Naive thymus-derived CD4-positive, alpha-beta T cell (primary cell): ENCODE measurements at regions of chr4 and their contacts with region 1.

Region 1: DNA sequence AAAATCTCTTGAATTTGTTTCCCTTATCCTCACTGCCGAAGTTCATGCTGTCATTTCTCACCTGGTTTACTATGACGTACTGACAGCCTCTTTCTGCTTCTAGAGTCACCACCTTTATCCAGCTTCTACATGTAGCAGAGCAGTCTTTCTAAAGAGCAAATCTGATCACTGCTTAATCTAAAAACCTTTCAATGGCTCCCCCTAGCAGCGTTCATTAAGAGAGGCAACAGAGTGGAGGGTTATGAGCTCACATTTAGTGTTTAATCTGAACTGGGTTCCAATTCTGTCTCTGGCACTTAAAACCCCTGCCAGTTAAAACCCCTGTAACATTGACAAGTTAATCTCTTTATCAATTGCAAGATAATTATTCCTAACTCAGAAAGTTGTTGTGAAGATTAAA is 4.4 kb downstream of the RBPJ start:
- DNase-seq: peak in 6 of 9 donors; percentile 16 to 40 (median 26)
- ATAC-seq: peak; percentile 46
- H3K4me3 ChIP-seq: no peak overlapping the region
- H3K4me3 Mint-ChIP-seq: peak overlapping the region in 2 of 10 donors; percentile 4 to 61
- H3K27ac ChIP-seq: no peak overlapping the region
- H3K27ac Mint-ChIP-seq: peak overlapping the region in 4 of 9 donors; percentile 1 to 53 (median 9)
- H3K4me1 ChIP-seq: peaks cover 10 to 12% of the 10 kb centered on the region in 2 donors
- H3K4me1 Mint-ChIP-seq: peaks cover 41 to 58% (median 53%) of the 10 kb centered on the region in 7 donors
- H3K27me3 ChIP-seq: no peaks in the 10 kb centered on the region
- H3K27me3 Mint-ChIP-seq: no peaks in the 10 kb centered on the region

Region 2: DNA sequence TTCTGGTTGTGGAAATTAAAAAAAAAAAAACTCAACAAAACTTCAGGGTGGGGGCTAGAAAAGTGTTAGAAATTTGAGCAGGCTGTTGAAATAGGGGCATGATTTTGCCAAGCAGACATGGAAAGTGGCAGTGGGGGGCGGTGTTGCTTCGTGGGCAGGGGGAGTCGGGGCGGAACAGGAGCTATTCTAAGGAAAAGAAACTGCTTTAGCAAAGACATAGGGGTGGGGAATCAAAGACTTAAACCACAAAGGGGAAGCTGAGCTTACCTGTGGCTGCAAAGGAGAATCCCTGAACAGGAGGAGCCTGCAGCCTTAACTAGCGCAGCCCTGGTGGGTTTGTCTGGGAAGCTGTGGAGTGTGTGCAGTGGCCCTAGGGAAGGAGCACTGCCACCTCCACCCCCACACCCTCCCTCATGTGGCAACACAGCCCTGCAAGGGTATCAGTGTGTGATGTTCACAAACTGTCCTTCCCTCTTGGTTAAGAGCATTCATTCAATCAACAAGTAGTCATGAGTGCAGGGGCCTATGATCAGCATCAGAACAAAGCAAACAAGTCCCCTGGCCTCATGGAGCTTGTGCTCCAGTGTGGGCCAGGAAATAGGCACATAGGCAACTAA is 482.9 kb before region 1 on chr4:
- CTCF ChIA-PET with region 1: interaction called, 3 read pairs
- POLR2A ChIA-PET with region 1: no interaction called
- intact Hi-C with region 1: loop called (anchors 5 kb)
- DNase-seq: peak in 7 of 9 donors; percentile 24 to 51 (median 46)
- ATAC-seq: peak; percentile 78
- H3K4me3 ChIP-seq: no peak overlapping the region
- H3K4me3 Mint-ChIP-seq: peak overlapping the region; percentile 1 to 63 (median 40)
- H3K27ac ChIP-seq: no peak overlapping the region
- H3K27ac Mint-ChIP-seq: peak overlapping the region in 4 of 9 donors; percentile 16 to 84 (median 40)
- H3K4me1 ChIP-seq: peaks cover 5 to 14% of the 10 kb centered on the region in 2 donors
- H3K4me1 Mint-ChIP-seq: peaks cover 27 to 55% (median 37%) of the 10 kb centered on the region in 7 donors
- H3K27me3 ChIP-seq: no peaks in the 10 kb centered on the region
- H3K27me3 Mint-ChIP-seq: no peaks in the 10 kb centered on the region

Region 3: GRCh38 chr4:25857403-25857802 is 467.8 kb before region 1 on chr4:
- CTCF ChIA-PET with region 1: no interaction called
- POLR2A ChIA-PET with region 1: interaction called, 6 read pairs
- intact Hi-C with region 1: loop called in 1 of 2 experiments (anchors 2 kb)
- DNase-seq: no peak
- ATAC-seq: no peak
- H3K4me3 ChIP-seq: no peak overlapping the region
- H3K4me3 Mint-ChIP-seq: peak overlapping the region in 2 of 10 donors; percentile 1
- H3K27ac ChIP-seq: no peak overlapping the region
- H3K27ac Mint-ChIP-seq: peak overlapping the region; percentile 28 to 97 (median 61)
- H3K4me1 ChIP-seq: peaks cover 41 to 54% of the 10 kb centered on the region in 2 donors
- H3K4me1 Mint-ChIP-seq: peaks cover 57 to 77% (median 73%) of the 10 kb centered on the region in 7 donors
- H3K27me3 ChIP-seq: no peaks in the 10 kb centered on the region
- H3K27me3 Mint-ChIP-seq: peaks cover 0 to 3% (median 0%) of the 10 kb centered on the region in 5 donors

Region 4: DNA sequence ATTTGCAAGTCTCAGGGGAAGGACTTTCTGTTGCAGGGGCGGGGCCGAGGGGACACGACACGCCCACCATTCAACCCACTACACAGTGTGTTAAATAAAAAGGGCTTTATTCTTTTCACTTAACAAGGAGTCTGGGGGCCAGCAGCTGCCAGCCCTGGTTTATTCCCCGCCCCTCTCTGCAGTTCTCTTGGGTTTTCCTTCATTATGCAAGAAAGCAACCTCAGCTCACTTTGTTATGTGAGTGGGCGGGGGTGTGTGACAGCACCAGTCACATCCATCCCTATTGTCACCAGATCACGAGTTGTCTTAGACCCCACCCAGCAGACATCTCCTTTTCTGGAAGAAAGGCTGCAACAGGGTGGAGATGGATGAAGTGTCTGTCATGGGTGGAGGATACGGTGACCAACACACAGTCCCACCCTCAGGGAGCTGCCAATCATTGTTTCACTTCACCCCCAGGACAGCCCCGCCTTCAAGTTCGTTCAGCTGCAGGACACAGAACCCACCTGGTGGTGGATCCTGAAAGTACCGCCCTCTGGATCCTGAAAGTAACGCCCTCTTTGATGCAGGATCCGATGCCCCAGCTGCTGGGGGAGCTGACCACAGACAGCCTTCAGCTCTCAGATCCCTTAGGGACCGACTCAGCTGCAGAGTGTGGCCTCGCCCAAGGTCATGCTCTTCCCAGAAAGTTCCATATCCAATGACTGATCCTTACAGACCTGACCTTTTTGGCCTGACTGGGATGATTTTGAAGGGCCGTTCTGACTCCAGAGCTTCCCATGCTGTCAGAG is 331.6 kb before region 1 on chr4:
- CTCF ChIA-PET with region 1: interaction called, 4 read pairs
- POLR2A ChIA-PET with region 1: no interaction called
- intact Hi-C with region 1: loop called (anchors 1 kb)
- DNase-seq: peak in 1 of 9 donors; percentile 8
- ATAC-seq: peak; percentile 41
- H3K4me3 ChIP-seq: no peak overlapping the region
- H3K4me3 Mint-ChIP-seq: no peak overlapping the region
- H3K27ac ChIP-seq: no peak overlapping the region
- H3K27ac Mint-ChIP-seq: peak overlapping the region in 2 of 9 donors; percentile 48 to 62
- H3K4me1 ChIP-seq: no peaks in the 10 kb centered on the region
- H3K4me1 Mint-ChIP-seq: peaks cover 0 to 11% (median 0%) of the 10 kb centered on the region in 7 donors
- H3K27me3 ChIP-seq: no peaks in the 10 kb centered on the region
- H3K27me3 Mint-ChIP-seq: no peaks in the 10 kb centered on the region

Region 5: DNA sequence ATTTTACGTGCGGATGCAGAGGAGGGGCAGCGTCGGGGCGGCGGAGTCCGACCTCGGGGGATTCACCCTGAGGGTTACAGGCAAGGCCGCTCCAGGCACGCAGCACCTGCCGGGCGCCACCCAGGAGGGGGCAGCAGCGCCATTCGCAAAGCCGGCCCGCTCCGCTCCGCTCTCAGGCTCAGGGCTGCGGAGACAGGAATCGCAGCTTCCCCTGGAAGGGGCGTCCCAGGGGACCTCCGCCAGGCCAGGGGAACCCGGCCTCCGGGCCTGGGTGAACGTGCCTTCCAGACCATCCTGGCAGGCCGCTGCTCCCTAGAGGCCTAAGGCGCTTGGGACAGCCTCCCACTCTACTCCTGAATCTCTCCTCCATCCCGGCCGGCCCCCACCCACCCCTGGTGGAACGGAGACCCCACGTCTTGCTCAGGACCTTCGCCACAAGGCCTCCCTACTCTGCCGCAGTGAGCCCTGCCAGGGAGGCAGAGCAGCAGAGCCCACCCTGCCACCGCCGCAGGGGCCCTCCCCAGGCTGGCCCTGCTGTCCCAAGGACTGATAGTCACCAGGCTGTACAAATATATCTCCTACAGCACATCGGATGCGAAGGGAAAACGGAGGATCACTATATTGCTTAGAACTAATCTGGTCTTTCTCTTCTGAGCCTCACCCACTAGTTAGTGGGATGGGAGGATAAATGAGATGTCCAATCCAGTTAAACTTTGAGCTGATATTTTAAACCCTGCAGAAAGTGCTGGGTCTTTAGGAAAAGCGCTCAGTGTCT is 296.2 kb before region 1 on chr4:
- CTCF ChIA-PET with region 1: interaction called, 5 read pairs
- POLR2A ChIA-PET with region 1: no interaction called
- intact Hi-C with region 1: loop called (anchors 1 kb)
- DNase-seq: peak in 8 of 9 donors; percentile 11 to 82 (median 18)
- ATAC-seq: peak; percentile 80
- H3K4me3 ChIP-seq: no peak overlapping the region
- H3K4me3 Mint-ChIP-seq: peak overlapping the region in 2 of 10 donors; percentile 12 to 39
- H3K27ac ChIP-seq: no peak overlapping the region
- H3K27ac Mint-ChIP-seq: no peak overlapping the region
- H3K4me1 ChIP-seq: no peaks in the 10 kb centered on the region
- H3K4me1 Mint-ChIP-seq: peaks cover 0 to 10% (median 0%) of the 10 kb centered on the region in 7 donors
- H3K27me3 ChIP-seq: peaks cover 0 to 4% of the 10 kb centered on the region in 2 donors
- H3K27me3 Mint-ChIP-seq: peaks cover 0 to 27% (median 16%) of the 10 kb centered on the region in 5 donors

Region 6: DNA sequence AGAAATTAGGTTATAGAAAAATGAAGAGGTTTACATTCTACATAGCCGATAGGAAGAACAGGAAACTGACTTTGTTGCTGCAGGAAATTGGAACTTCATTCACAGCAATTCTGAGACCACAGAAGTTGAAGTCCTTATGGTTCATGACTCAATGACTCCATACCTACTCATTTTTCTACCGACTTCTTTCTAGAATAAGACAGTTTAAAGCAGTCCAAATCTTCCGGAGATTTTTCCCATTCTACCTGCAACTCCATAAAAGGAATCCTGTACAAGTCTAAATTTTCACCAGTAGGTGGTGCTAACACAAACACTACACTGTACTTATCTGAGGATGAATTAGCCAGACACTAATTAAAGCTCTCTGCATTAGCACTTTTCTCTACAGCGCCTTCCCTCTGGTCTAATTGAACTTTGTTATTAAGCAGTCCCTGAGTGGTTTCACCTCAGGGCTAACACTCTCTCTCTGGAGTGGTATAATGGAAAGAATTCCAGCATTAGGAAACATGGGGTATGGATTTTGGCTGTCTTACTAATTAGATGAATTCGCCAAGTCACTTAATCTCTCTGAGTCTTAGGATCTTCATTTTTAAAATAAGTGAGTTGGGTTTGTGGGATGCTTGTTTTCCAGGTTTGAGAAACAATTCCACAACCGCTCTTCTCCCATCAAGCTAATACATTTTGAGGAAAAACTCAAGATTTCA is 243.2 kb before region 1 on chr4:
- CTCF ChIA-PET with region 1: interaction called, 8 read pairs
- POLR2A ChIA-PET with region 1: interaction called, 4 read pairs
- intact Hi-C with region 1: loop called (anchors 1 kb)
- DNase-seq: peak in 5 of 9 donors; percentile 16 to 29 (median 22)
- ATAC-seq: peak; percentile 66
- H3K4me3 ChIP-seq: no peak overlapping the region
- H3K4me3 Mint-ChIP-seq: peak overlapping the region in 1 of 10 donors; percentile 49
- H3K27ac ChIP-seq: no peak overlapping the region
- H3K27ac Mint-ChIP-seq: peak overlapping the region in 1 of 9 donors; percentile 73
- H3K4me1 ChIP-seq: no peaks in the 10 kb centered on the region
- H3K4me1 Mint-ChIP-seq: peaks cover 0 to 65% (median 6%) of the 10 kb centered on the region in 7 donors
- H3K27me3 ChIP-seq: no peaks in the 10 kb centered on the region
- H3K27me3 Mint-ChIP-seq: peaks cover 0 to 38% (median 7%) of the 10 kb centered on the region in 5 donors